ENCODE measurements at regions of chr14 and their contacts with region 1.

Region 1: DNA sequence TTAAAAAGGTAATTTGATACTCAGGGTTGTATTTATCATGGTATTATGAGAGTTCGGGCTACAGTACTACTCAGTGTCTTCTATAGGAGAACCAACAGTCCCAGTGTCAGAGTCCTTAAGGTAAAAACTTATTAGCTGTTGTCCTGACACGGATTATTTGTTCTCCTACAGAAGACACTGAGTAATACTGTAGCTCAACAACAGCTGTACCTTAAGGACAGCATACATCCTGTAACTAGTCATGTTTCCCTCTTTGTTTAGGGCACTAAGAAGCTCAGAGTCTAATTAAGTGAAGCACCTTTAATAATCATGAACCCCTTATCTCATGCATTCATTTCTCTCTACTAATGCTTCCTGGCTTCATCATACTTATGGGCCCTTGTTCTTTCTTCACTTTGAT is 33.9 kb downstream of the ARF6 start:
- DNase-seq: no peak
- H3K4me3 ChIP-seq: no peak overlapping the region
- H3K27ac ChIP-seq: no peak overlapping the region
- H3K4me1 ChIP-seq: no peaks in the 10 kb centered on the region
- H3K27me3 ChIP-seq: no peaks in the 10 kb centered on the region
- CTCF ChIP-seq: no peak

Region 2: GRCh38 chr14:49189375-49189774 is 737.4 kb before region 1 on chr14:
- CTCF ChIA-PET with region 1: no interaction called
- dilution Hi-C with region 1: no loop called
- in situ Hi-C with region 1: no loop called
- intact Hi-C with region 1: no loop called
- DNase-seq: no peak
- H3K4me3 ChIP-seq: no peak overlapping the region
- H3K27ac ChIP-seq: no peak overlapping the region
- H3K4me1 ChIP-seq: no peaks in the 10 kb centered on the region
- H3K27me3 ChIP-seq: no peaks in the 10 kb centered on the region
- CTCF ChIP-seq: no peak

Region 3: GRCh38 chr14:49892636-49893308 is 34.0 kb before region 1 on chr14 and contains the start of gene ARF6:
- CTCF ChIA-PET with region 1: no interaction called
- dilution Hi-C with region 1: no loop called
- in situ Hi-C with region 1: no loop called
- intact Hi-C with region 1: no loop called
- DNase-seq: peak; percentile 97
- H3K4me3 ChIP-seq: peak within 1 kb of the TSS; percentile 87 to 100 (median 96)
- H3K27ac ChIP-seq: peak within 1 kb of the TSS; percentile 94
- H3K4me1 ChIP-seq: peaks cover 11% of the 10 kb centered on the region
- H3K27me3 ChIP-seq: no peaks in the 10 kb centered on the region
- CTCF ChIP-seq: peak in 1 of 2 donors; percentile 39
- total RNA-seq, gene ARF6: 85.5 to 132 TPM

Region 4: GRCh38 chr14:49971156-49972130 is 44.6 kb after region 1 on chr14:
- CTCF ChIA-PET with region 1: interaction called, 18 read pairs
- dilution Hi-C with region 1: no loop called
- in situ Hi-C with region 1: no loop called
- intact Hi-C with region 1: no loop called
- DNase-seq: no peak
- H3K4me3 ChIP-seq: no peak overlapping the region
- H3K27ac ChIP-seq: peak overlapping the region; percentile 90
- H3K4me1 ChIP-seq: peaks cover 70% of the 10 kb centered on the region
- H3K27me3 ChIP-seq: no peaks in the 10 kb centered on the region
- CTCF ChIP-seq: no peak

Region 5: DNA sequence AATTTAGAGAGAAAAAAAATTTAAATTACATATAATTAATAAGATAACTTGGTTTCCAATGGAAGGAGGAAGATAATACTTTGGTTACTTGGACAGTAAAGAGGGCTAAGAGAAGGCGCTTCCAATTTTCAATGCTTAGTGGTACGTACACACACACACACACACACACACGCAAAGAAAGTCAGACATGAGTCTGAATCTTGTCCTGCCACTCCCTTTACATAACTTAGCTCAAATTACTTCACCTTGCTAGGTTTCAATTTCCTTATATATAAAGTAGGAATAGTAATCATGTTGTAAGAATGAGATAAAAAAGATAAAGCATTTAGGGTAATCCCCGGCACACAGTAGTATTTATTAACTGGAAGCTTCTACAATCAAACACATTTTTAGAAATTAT is 229.3 kb after region 1 on chr14:
- CTCF ChIA-PET with region 1: no interaction called
- dilution Hi-C with region 1: no loop called
- in situ Hi-C with region 1: no loop called
- intact Hi-C with region 1: no loop called
- DNase-seq: no peak
- H3K4me3 ChIP-seq: no peak overlapping the region
- H3K27ac ChIP-seq: no peak overlapping the region
- H3K4me1 ChIP-seq: no peaks in the 10 kb centered on the region
- H3K27me3 ChIP-seq: no peaks in the 10 kb centered on the region
- CTCF ChIP-seq: no peak

Measured in mammary epithelial cell (primary cell).